ENCODE measurements at regions of chr9 and their contacts with region 1.

Region 1: DNA sequence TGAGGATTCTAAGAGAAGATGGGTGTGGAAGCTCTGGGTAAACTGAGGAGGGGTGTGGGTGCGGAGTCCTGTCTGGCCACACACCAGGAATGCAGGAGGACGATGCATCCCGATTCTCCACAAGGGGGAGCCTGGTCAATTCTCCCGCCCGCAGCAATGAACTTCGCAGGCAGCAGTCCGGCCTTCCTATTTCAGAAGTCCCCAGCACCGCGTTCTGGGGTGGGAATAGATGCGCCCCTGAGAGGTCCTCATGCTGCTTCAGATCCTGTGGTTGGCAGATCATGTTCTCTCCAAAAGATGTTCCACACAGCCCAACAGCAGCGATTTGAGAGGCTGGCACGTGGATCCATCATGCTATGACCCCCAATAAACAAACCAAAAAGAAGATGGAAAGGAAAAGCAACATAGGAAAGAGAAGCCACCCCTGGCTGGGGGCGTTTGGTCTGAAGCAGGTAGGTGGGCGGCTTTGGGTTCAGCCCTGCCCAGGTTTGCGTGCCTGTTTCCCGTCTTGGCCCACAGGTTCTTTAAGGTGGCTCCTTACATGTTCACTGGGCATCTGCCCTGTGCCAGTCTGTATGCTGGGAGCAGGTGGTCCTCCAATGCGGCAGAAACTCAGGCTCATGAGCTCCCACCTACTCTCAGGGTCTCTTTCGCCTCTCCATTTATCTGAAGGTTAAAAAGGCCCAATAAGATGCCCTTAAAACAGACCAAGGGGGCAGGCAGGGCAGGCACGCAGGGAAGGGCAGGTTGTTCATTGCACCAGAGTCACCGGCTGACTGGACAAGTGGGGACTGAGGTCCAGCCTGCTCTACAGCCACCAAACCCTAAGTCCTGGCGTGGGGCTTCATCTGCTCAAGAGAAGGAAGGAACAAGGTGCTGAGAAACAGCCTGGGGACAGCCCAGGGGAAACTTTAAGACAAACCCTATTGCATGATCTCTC is 171.6 kb downstream of the PAX5 start:
- DNase-seq: peak; percentile 41

Region 2: DNA sequence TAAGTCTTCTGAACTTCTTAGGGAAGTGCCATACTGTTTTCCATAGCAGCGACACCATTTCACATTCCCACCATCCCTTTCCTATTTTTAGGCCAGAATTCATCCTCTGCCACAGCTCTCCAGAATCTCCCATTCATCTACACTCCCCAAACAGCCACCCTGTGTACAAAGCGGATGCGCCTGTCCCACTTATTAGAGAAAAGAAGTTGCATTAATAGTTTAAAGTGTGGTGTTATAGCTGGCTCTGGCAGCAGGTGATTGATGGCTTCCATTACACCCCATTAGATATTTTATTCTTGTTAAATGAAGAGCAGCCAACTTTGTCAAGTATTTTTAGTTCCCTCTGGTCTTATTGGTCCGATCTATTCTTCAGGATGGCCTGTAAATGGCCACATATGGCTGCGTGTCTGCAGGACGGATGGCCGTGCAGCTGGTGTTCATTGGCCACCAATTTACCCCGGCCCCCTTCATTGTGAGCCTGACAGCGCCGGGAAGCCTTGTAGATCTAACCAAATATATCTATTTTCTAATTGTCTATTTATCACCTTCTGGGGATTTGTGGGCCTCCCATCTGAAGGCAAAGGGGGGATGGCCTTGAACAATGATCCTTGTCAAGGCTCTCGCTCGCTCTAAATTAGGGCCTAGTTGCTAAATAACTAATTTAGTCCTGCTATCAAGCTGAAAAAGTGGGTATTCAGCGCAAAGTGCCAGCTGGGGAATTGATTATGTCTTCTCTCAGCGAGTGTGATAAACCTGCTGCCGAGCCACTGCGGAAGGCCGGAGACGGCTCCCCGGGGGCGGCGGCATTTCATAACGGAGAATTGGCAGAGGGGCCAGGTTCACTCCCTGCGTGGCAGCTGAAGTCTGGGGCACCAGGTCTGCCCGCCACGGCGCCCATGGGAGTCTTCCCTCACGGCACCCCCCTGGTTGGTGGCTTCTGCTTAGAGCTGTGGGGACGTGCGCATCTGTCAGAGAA is 148.7 kb before region 1 on chr9:
- in situ Hi-C with region 1: no loop called
- DNase-seq: no peak

Region 3: GRCh38 chr9:36946653-36947052 is 84.2 kb after region 1 on chr9:
- in situ Hi-C with region 1: no loop called
- DNase-seq: no peak

Region 4: GRCh38 chr9:36980148-36980974 is 117.9 kb after region 1 on chr9:
- in situ Hi-C with region 1: loop called (anchors 10 kb)
- DNase-seq: peak; percentile 61